PC-3 (cell line): ENCODE measurements at regions of chr3 and their contacts with region 1.

Region 1: GRCh38 chr3:36700537-36701248 is 63.7 kb downstream of the DCLK3 start:
- DNase-seq: peak; percentile 81
- ATAC-seq: peak; percentile 74
- H3K4me3 ChIP-seq: no peak overlapping the region
- H3K27ac ChIP-seq: no peak overlapping the region
- H3K4me1 ChIP-seq: peaks cover 16% of the 10 kb centered on the region
- H3K27me3 ChIP-seq: no peaks in the 10 kb centered on the region
- CTCF ChIP-seq: peak; percentile 94

Region 2: DNA sequence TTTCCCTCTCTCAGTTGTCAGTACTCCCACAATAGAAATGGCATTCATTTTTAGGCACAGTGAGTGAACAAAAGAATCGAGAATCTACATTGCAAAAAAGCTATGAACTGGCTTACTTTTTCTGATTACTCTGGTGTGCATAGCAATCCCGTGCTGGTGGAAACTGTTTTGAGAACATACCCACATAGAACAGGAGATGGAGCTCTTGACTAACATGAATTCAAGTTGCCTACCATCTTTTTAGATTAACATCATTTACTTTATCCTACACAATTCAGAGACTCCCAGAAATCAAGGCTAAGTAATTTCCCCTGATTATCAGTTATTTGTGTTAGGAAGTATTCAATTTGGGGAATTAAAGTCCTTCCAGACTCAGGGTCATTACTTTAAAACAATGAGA is 734.8 kb before region 1 on chr3:
- CTCF ChIA-PET with region 1: interaction called, 5 read pairs
- POLR2A ChIA-PET with region 1: no interaction called
- intact Hi-C with region 1: loop called (anchors 1 kb)
- DNase-seq: peak; percentile 75
- ATAC-seq: peak; percentile 86
- H3K4me3 ChIP-seq: no peak overlapping the region
- H3K27ac ChIP-seq: no peak overlapping the region
- H3K4me1 ChIP-seq: peaks cover 3% of the 10 kb centered on the region; the same call in 1 of the 2 replicates
- H3K27me3 ChIP-seq: no peaks in the 10 kb centered on the region
- CTCF ChIP-seq: peak; percentile 87

Region 3: DNA sequence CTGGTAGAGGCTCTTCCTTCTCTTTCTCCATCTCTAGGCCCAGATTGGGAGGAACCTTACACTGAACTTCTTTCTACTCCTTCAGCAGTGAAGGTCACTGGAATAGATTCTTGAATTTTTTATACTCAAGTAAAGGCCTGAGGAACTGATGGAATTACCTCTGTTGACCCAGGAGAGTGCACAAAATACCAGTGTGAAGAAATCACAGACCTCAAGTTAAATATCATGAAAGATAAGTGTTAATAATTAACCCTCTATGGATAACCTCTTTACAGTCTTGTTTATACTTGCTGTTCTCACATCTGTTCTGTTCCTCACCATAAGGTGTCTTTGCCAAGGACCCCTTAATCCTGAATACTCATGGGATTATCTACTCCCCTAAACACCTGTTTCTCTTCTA is 564.8 kb before region 1 on chr3:
- CTCF ChIA-PET with region 1: interaction called, 18 read pairs
- POLR2A ChIA-PET with region 1: no interaction called
- intact Hi-C with region 1: no loop called
- DNase-seq: no peak
- ATAC-seq: no peak
- H3K4me3 ChIP-seq: no peak overlapping the region
- H3K27ac ChIP-seq: no peak overlapping the region
- H3K4me1 ChIP-seq: no peaks in the 10 kb centered on the region
- H3K27me3 ChIP-seq: no peaks in the 10 kb centered on the region
- CTCF ChIP-seq: no peak

Region 4: GRCh38 chr3:36416599-36416998 is 284.1 kb before region 1 on chr3:
- CTCF ChIA-PET with region 1: no interaction called
- POLR2A ChIA-PET with region 1: no interaction called
- intact Hi-C with region 1: loop called (anchors 2 kb)
- DNase-seq: peak; percentile 82
- ATAC-seq: peak; percentile 97
- H3K4me3 ChIP-seq: peak overlapping the region; percentile 33; the same call in 1 of the 2 replicates
- H3K27ac ChIP-seq: peak overlapping the region; percentile 87
- H3K4me1 ChIP-seq: peaks cover 27% of the 10 kb centered on the region
- H3K27me3 ChIP-seq: no peaks in the 10 kb centered on the region
- CTCF ChIP-seq: no peak

Region 5: DNA sequence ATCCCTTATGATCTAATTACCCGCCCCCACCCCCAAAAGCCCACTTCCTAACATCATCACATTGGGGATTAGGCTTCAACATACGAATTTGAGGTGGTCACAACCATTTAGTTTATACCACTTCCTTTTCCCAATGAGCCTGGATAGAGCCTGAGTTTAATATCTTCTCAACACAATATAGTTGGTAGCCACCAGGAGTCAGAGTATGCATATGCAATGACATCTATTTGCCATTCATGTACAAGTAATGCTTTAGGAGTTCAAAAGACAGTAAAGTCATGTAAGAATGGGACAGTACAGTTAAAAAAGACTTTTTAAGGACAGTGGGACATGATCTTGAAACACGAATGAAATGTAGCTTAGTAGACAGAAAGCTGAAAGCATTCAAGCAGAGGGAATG is 108.7 kb before region 1 on chr3:
- CTCF ChIA-PET with region 1: no interaction called
- POLR2A ChIA-PET with region 1: no interaction called
- intact Hi-C with region 1: loop called (anchors 1 kb)
- DNase-seq: peak; percentile 44
- ATAC-seq: peak; percentile 70
- H3K4me3 ChIP-seq: no peak overlapping the region
- H3K27ac ChIP-seq: no peak overlapping the region
- H3K4me1 ChIP-seq: 0 out of 2 replicates have a peak, but pooled peaks cover under 1% of the 10 kb centered on the region
- H3K27me3 ChIP-seq: no peaks in the 10 kb centered on the region
- CTCF ChIP-seq: peak; percentile 62

Region 6: DNA sequence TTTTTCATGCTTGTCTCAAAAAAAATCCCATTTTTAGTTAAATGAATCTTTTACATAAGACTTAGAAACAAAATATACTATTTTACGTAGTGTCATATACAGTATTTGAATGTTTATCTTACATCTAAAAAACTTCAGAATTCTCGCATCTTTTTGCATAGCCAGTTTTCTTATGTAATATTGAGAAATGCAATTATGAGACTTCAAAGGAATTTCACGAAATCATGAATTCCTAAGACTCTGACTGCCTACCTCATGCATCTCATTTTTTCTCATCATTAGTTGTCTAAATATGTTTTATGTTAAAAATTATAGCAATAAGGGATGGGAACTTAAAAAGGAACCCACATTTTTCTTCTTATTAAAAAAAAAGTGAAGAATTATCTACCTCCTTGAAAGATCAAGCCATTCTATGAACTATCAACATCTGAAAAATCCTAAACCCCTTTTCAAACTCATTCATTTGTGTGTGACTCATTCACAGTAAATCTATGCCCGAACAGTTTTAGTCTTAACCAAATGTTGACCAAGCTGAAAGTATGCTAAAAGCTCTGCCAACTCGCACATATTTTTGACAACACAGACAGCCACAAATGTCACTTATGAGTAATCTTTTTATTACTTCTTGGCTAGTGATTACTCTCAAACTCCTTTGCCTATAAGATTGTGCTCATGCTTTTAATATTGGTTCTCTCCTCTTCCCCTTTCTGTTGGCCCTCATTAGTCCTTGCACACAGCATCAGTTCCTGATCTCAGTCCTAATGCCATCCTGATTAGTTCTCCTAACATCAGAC is 52.3 kb before region 1 on chr3:
- CTCF ChIA-PET with region 1: no interaction called
- POLR2A ChIA-PET with region 1: no interaction called
- intact Hi-C with region 1: loop called (anchors 1 kb)
- DNase-seq: peak; percentile 94
- ATAC-seq: peak; percentile 91
- H3K4me3 ChIP-seq: peak overlapping the region; percentile 26; the same call in 1 of the 2 replicates
- H3K27ac ChIP-seq: peak overlapping the region; percentile 51
- H3K4me1 ChIP-seq: peaks cover 34% of the 10 kb centered on the region
- H3K27me3 ChIP-seq: no peaks in the 10 kb centered on the region
- CTCF ChIP-seq: no peak

Region 7: DNA sequence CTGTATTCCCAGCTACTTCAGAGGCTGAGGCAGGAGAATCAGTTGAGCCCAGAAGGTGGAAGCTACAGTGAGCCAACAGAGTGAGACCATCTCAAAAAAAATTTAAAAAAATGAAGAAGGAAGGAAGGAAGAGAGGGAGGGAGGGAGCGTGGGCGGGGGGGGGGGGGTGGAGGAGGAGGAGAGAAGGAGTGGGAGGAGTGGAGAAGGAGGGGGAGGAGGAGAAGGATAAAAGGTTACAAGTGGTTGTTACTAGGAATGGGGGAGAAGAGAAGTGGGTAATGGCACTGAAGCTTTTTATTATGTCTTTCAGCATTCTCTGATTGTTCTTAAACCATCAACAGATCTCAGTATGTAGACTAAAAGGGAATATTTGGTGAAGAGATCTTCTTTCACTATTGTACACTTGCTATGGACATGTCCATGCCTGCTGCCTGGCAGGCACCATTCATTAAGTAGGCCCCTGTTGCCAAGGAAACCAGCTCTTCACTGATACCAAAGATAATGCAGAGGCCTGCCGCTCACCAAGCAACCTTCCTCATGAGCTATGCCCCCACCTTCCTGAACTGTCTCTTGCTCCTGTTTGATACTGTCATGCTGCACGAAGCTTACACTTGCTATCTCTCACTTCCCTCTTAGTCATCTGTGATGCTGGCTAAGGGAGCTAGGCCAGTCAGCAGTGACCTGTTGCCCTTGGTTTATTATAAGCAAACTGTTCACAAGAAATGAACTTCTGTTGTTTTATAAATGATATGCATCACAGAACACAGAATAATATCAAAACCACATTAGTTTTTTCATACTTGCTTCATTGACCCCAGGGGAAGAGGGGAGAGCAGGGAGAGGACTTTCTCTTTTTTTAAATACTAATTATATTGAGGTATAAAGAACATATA is 269.1 kb after region 1 on chr3:
- CTCF ChIA-PET with region 1: no interaction called
- POLR2A ChIA-PET with region 1: no interaction called
- intact Hi-C with region 1: no loop called
- DNase-seq: peak; percentile 55
- ATAC-seq: peak; percentile 94
- H3K4me3 ChIP-seq: no peak overlapping the region
- H3K27ac ChIP-seq: no peak overlapping the region
- H3K4me1 ChIP-seq: peaks cover 13% of the 10 kb centered on the region
- H3K27me3 ChIP-seq: no peaks in the 10 kb centered on the region
- CTCF ChIP-seq: no peak